Vagina (tissue), 2 donors: ENCODE measurements at regions of chr11 and their contacts with region 1.

Region 1: GRCh38 chr11:62771144-62772021 is at the start of gene TAF6L:
- DNase-seq: peak in 1 of 2 donors; percentile 99
- H3K4me3 ChIP-seq: peak within 1 kb of the TSS; percentile 66 to 78
- H3K27ac ChIP-seq: peak within 1 kb of the TSS; percentile 98
- H3K4me1 ChIP-seq: peaks cover 29% of the 10 kb centered on the region
- H3K27me3 ChIP-seq: no peaks in the 10 kb centered on the region
- CTCF ChIP-seq: no peak
- POLR2A ChIP-seq: peak in 1 of 2 donors; percentile 8
- total RNA-seq, gene TAF6L: 24.8 TPM

Region 2: GRCh38 chr11:62705880-62706849 is 65.2 kb before region 1 on chr11:
- intact Hi-C with region 1: no loop called
- DNase-seq: peak in 1 of 2 donors; percentile 90
- H3K4me3 ChIP-seq: peak overlapping the region; percentile 55 to 62
- H3K27ac ChIP-seq: peak overlapping the region; percentile 85
- H3K4me1 ChIP-seq: peaks cover 45% of the 10 kb centered on the region
- H3K27me3 ChIP-seq: no peaks in the 10 kb centered on the region
- CTCF ChIP-seq: no peak
- POLR2A ChIP-seq: peak in 1 of 2 donors; percentile 25

Region 3: GRCh38 chr11:62726915-62727763 is 44.2 kb before region 1 on chr11 and contains the start of gene HNRNPUL2:
- intact Hi-C with region 1: loop called (anchors 5 kb)
- DNase-seq: peak in 1 of 2 donors; percentile 98
- H3K4me3 ChIP-seq: peak within 1 kb of the TSS; percentile 71 to 90
- H3K27ac ChIP-seq: peak within 1 kb of the TSS; percentile 93
- H3K4me1 ChIP-seq: peaks cover 58% of the 10 kb centered on the region
- H3K27me3 ChIP-seq: no peaks in the 10 kb centered on the region
- CTCF ChIP-seq: no peak
- POLR2A ChIP-seq: peak in 1 of 2 donors; percentile 88
- total RNA-seq, gene HNRNPUL2: 30.7 TPM

Region 4: GRCh38 chr11:64165849-64166635 is 1394.7 kb after region 1 on chr11 and contains the start of gene MACROD1:
- intact Hi-C with region 1: loop called (anchors 10 kb)
- DNase-seq: no peak
- H3K4me3 ChIP-seq: peak within 1 kb of the TSS; percentile 59 to 65
- H3K27ac ChIP-seq: peak within 1 kb of the TSS; percentile 82
- H3K4me1 ChIP-seq: peaks cover 30% of the 10 kb centered on the region
- H3K27me3 ChIP-seq: no peaks in the 10 kb centered on the region
- CTCF ChIP-seq: no peak
- POLR2A ChIP-seq: peak in 1 of 2 donors; percentile 16
- total RNA-seq, gene MACROD1: 61.4 TPM